ENCODE measurements at regions of chr7 and their contacts with region 1.

Region 1: DNA sequence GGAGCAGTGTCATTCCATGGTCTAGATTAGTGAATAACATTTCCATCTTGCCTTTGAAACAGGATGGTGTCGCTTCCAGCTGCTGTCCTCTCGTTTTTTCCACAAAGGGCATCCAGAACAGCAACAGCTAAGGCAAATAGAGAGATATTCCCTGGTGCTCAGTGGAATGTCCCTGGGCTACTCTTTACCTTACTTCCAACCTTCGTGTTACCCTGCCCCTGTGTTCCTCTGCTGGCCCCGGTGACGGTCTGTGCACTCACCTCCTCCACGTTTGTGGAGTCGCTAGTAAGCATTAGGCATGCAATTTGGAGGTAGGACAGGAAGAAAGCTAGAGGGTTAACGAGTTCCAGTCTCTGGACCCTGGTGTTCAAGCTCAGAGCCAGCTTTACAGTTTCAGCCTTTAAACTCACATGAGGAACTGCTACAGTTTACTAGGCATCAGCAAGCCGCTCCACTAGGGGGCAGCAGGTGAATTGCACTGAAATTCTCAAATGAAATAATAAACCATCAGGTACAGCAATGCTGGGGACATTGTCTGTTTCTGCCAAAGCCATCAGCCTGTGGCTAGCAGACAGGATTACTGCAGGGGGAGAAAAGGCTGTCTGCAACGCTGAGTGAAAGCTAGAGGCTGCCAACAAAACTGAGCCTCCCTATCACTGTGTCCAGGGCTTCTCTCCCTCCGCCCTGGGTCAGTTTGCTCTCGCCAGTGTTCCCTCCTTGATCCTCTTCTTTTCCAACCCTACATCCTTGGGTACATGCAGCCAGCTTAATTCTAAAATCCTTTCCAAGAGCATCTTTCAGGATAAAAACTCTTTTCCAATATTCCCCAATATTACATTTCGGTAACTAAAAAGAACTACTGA is 9.0 kb downstream of the MRPL32 start:
- DNase-seq: no peak
- H3K4me3 ChIP-seq: no peak overlapping the region
- H3K27me3 ChIP-seq: no peaks in the 10 kb centered on the region
- CTCF ChIP-seq: peak; percentile 93

Region 2: GRCh38 chr7:43108255-43109011 is 167.2 kb after region 1 on chr7:
- CTCF ChIA-PET with region 1: interaction called, 18 read pairs
- POLR2A ChIA-PET with region 1: no interaction called
- DNase-seq: no peak
- H3K4me3 ChIP-seq: no peak overlapping the region
- H3K27me3 ChIP-seq: peaks cover 16% of the 10 kb centered on the region
- CTCF ChIP-seq: peak; percentile 96

Region 3: GRCh38 chr7:43248961-43249822 is 308.0 kb after region 1 on chr7:
- CTCF ChIA-PET with region 1: interaction called, 13 read pairs
- POLR2A ChIA-PET with region 1: no interaction called
- DNase-seq: peak; percentile 41
- H3K4me3 ChIP-seq: peak overlapping the region; percentile 34
- H3K27me3 ChIP-seq: no peaks in the 10 kb centered on the region
- CTCF ChIP-seq: no peak

Region 4: DNA sequence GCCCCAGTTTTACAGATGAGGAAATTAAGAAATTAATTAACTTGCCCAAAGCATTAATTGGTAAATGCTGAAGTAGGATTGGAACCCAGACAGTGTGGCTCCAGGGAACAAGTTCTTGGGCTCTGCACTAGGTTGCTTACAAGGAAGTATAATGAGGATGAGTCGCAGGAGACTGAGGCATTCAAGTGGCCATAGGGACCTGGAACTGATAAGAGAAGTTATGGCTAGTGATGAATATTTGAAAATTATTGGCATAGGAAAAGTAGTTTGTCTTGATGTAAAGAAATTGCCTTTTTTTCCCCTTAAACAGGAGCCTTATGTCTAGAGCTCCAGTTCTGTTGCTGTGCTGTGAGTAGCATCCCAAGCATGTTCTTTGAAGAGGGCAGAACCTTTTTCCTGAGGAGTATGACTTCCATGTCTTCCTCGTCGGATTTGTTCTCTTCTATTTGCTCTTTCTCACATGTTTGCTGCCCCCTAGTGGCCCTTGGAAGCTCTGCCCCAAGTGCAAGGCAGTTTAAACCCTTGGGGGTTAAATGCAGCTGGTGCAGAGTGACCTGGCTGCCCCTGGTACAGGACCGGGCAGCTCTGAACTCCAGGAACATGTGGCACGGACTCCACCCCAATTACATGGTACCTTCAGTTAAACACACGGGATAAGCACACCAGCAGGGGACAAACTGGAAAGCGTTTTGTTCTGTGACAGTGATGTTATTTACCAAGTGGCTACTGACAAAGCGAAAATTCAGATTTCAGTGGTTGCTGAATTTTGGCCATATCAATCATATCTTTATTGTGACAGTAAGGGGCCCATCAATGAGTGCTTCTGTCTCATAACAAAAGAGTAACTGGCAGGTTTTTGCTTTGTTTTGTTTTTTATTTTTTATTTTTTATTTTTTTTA is 320.0 kb after region 1 on chr7:
- CTCF ChIA-PET with region 1: interaction called, 67 read pairs
- POLR2A ChIA-PET with region 1: no interaction called
- DNase-seq: peak; percentile 37
- H3K4me3 ChIP-seq: no peak overlapping the region
- H3K27me3 ChIP-seq: no peaks in the 10 kb centered on the region
- CTCF ChIP-seq: peak; percentile 94

Region 5: GRCh38 chr7:43417455-43417854 is 476.2 kb after region 1 on chr7:
- CTCF ChIA-PET with region 1: no interaction called
- POLR2A ChIA-PET with region 1: no interaction called
- DNase-seq: no peak
- H3K4me3 ChIP-seq: no peak overlapping the region
- H3K27me3 ChIP-seq: no peaks in the 10 kb centered on the region
- CTCF ChIP-seq: no peak